Cardiac septum (tissue), 1 donor: ENCODE measurements at regions of chr6 and their contacts with region 1.

Region 1: GRCh38 chr6:14638906-14639761 is 521.6 kb downstream of the CD83 start:
- DNase-seq: peak; percentile 81

Region 2: DNA sequence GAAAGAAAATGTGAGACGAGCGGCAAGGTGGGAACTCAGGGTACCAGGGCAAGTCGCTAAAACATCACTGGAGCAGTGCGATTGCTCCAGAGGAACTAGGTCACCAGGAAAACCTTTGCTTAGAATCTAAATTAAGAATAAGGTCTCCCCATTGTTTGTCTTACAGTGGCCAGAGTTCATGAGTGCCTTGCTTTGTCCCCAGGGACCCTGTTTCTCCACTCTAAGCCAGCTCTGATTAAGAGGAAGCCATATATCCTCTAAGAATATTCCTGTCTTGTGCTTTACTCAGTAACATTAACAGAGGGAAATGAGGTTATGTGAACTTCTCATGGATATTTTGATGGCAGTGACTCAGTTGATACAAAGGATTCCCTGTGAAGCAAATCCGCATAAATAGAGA is 215.8 kb before region 1 on chr6:
- intact Hi-C with region 1: loop called (anchors 5 kb)
- DNase-seq: no peak

Region 3: GRCh38 chr6:14540276-14540675 is 98.9 kb before region 1 on chr6:
- intact Hi-C with region 1: no loop called
- DNase-seq: no peak

Region 4: GRCh38 chr6:14621518-14621917 is 17.6 kb before region 1 on chr6:
- intact Hi-C with region 1: no loop called
- DNase-seq: no peak

Region 5: DNA sequence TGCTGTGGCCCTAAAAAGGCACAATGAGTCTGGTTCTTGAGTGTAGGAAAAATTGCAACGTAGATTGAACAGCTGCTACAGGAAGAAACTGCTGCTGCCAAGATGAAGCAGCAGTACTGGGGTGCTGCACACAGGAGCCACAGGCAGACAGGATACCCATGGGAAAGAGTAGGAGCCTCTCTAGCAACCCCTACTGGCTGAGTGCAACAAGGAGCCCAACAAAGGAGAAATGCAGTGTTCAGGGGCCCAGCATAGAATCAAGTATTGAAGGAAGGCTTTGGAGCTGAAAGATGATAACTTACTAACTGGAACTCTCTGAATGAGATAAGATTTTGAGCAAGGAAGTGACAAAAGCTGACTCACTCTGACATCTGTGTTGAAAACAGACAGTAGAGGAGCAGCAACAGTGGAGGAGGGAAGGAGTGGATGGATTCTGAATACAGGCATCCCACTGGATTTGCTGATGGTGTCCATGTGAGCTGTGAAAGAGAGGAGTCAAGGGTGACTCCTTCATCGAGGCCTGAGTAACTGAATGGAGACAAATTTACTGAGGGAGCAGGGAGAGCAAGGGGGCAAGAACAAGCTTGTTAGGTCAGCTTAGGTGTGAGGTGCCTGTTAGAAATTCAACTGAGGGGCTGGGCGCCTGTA is 72.0 kb after region 1 on chr6:
- intact Hi-C with region 1: loop called (anchors 5 kb)
- DNase-seq: no peak

Region 6: GRCh38 chr6:14824484-14825275 is 185.5 kb after region 1 on chr6:
- intact Hi-C with region 1: no loop called
- DNase-seq: no peak